ENCODE measurements at regions of chr6 and their contacts with region 1.

Region 1: DNA sequence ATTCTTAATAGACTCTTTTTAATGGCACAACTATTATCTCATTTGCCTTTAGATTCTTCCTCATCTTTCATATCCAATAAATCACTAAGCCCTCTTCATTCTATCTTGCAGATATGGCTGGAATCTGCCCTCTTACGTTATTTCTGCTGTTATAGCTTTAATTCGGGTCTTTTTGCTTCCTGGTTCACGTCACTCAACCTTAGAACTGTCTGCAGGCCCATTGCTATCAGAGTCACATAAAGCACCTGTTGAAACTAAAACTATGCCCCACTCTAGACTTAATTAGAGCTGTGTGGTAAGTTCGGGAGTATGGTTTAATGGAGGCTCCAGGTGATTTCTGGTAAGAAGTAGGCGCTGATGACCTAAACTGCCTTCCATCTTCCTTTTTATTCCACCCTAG is 988 bp downstream of the QRSL1 start:
- DNase-seq: no peak
- H3K4me3 ChIP-seq: peak overlapping the region; percentile 63 to 83 (median 79)
- H3K27ac ChIP-seq: no peak overlapping the region
- H3K4me1 ChIP-seq: peaks cover 0 to 7% of the 10 kb centered on the region in 2 donors
- H3K27me3 ChIP-seq: no peaks in the 10 kb centered on the region
- CTCF ChIP-seq: no peak
- POLR2A ChIP-seq: no peak

Region 2: GRCh38 chr6:105620878-105621277 is 1009.5 kb before region 1 on chr6:
- intact Hi-C with region 1: no loop called
- DNase-seq: no peak
- H3K4me3 ChIP-seq: no peak overlapping the region
- H3K27ac ChIP-seq: no peak overlapping the region
- H3K4me1 ChIP-seq: no peaks in the 10 kb centered on the region
- H3K27me3 ChIP-seq: no peaks in the 10 kb centered on the region
- CTCF ChIP-seq: no peak
- POLR2A ChIP-seq: no peak

Region 3: DNA sequence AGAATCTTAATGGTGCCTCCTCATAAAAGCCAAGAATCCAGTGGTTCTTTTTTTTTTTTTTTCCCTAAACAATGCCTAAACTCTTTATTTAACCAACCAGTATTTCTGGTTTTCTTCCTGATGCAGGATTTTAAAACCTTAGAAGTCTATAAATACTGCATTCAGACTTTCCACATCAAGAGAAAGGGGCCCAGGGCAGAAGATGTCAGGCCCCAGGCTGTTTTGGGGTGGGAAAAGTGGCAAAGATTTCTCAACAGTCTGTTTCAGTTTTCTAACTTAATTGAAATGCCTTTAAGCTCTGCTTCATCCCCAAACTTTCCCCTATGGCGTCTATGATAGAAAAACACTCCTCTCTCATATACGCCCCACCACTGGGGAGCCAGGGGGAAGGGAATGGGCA is 32.1 kb after region 1 on chr6:
- intact Hi-C with region 1: loop called (anchors 2 kb)
- DNase-seq: no peak
- H3K4me3 ChIP-seq: no peak overlapping the region
- H3K27ac ChIP-seq: peak overlapping the region in 1 of 2 donors; percentile 47
- H3K4me1 ChIP-seq: no peaks in the 10 kb centered on the region
- H3K27me3 ChIP-seq: no peaks in the 10 kb centered on the region
- CTCF ChIP-seq: no peak
- POLR2A ChIP-seq: no peak